Activated T-helper 2 cell treated with anti-CD3 and anti-CD28 coated beads, Interferon-gamma antibody, Interleukin-2, Interleukin-4, amounts not matched to agents 10 μg/mL and 5 μg/mL and 100 μg/mL, durations not matched to agents 14 hours and 24 hours and 36 hours (primary cell): ENCODE measurements at regions of chr3 and their contacts with region 1.

Region 1: GRCh38 chr3:171284308-171285075 is 175.7 kb downstream of the TNIK start:
- DNase-seq: no peak
- H3K4me3 Mint-ChIP-seq: peak overlapping the region; percentile 34
- H3K27ac Mint-ChIP-seq: peak overlapping the region; percentile 68
- H3K4me1 Mint-ChIP-seq: peaks cover 74% of the 10 kb centered on the region
- H3K27me3 Mint-ChIP-seq: no peaks in the 10 kb centered on the region

Region 2: DNA sequence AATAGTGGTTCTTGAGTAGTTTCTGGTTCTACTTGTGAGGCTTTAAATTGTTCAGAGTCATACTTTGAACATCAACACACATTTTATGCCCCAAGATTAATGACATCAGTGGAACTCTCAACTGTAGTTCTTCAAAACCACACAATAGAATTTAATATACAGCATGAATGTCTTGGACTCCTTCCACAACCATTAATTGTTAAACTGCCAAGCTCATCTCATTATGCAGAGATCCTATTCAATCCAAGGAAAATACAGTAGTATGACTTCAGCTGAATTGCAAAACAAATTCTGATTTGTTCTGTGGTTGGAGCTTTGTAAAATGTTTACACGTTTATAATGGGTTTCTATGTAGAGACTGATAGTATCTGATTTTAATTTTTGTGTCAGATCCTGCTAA is 58.8 kb before region 1 on chr3:
- intact Hi-C with region 1: loop called (anchors 1 kb)
- DNase-seq: no peak
- H3K4me3 Mint-ChIP-seq: no peak overlapping the region
- H3K27ac Mint-ChIP-seq: peak overlapping the region; percentile 69
- H3K4me1 Mint-ChIP-seq: peaks cover 56% of the 10 kb centered on the region
- H3K27me3 Mint-ChIP-seq: no peaks in the 10 kb centered on the region

Region 3: GRCh38 chr3:171248425-171249111 is 35.9 kb before region 1 on chr3:
- intact Hi-C with region 1: loop called (anchors 1 kb)
- DNase-seq: no peak
- H3K4me3 Mint-ChIP-seq: no peak overlapping the region
- H3K27ac Mint-ChIP-seq: no peak overlapping the region
- H3K4me1 Mint-ChIP-seq: peaks cover 40% of the 10 kb centered on the region
- H3K27me3 Mint-ChIP-seq: no peaks in the 10 kb centered on the region

Region 4: DNA sequence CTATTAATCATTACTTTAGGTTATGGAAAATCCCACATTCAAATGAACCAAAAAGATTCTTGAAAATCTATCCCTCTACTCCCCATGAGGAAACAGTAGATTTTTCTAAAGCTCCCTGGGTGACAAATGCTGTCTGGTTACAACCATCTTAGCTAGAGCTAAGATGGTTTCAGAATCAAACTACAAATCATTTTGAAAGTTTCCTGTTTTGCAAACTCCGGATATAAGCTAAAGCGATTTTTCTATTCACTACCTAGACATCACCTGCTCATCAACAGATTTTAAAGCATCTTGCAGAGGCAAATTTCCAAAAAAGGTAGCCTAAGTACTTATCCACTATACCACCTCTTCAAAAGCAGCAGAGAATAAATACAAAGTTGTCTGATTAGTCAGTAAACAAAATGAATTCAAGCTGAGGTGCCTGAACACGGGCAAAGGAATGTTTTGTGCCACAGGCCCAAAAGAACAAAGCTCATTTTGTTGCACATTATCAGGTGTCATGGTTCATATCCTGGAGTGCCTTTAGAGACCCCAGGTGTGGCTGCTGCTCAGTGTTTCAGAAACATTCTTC is 29.2 kb before region 1 on chr3:
- intact Hi-C with region 1: loop called (anchors 1 kb)
- DNase-seq: no peak
- H3K4me3 Mint-ChIP-seq: peak overlapping the region; percentile 60
- H3K27ac Mint-ChIP-seq: peak overlapping the region; percentile 94
- H3K4me1 Mint-ChIP-seq: peaks cover 92% of the 10 kb centered on the region
- H3K27me3 Mint-ChIP-seq: no peaks in the 10 kb centered on the region

Region 5: GRCh38 chr3:171269542-171269941 is 14.9 kb before region 1 on chr3:
- intact Hi-C with region 1: loop called (anchors 2 kb)
- DNase-seq: no peak
- H3K4me3 Mint-ChIP-seq: peak overlapping the region; percentile 46
- H3K27ac Mint-ChIP-seq: no peak overlapping the region
- H3K4me1 Mint-ChIP-seq: peaks cover 78% of the 10 kb centered on the region
- H3K27me3 Mint-ChIP-seq: no peaks in the 10 kb centered on the region

Region 6: GRCh38 chr3:171561596-171562323 is 277.3 kb after region 1 on chr3:
- intact Hi-C with region 1: loop called (anchors 2 kb)
- DNase-seq: no peak
- H3K4me3 Mint-ChIP-seq: peak overlapping the region; percentile 58
- H3K27ac Mint-ChIP-seq: peak overlapping the region; percentile 98
- H3K4me1 Mint-ChIP-seq: peaks cover 55% of the 10 kb centered on the region
- H3K27me3 Mint-ChIP-seq: no peaks in the 10 kb centered on the region